Lower leg skin (tissue), 4 donors: ENCODE measurements at regions of chr18 and their contacts with region 1.

Region 1: GRCh38 chr18:60809937-60810336 is 437.4 kb upstream of the MC4R start:
- DNase-seq: no peak
- H3K4me3 ChIP-seq: no peak overlapping the region
- CTCF ChIP-seq: no peak
- POLR2A ChIP-seq: no peak

Region 2: GRCh38 chr18:60421356-60422118 is 388.4 kb before region 1 on chr18:
- intact Hi-C with region 1: no loop called
- DNase-seq: no peak
- H3K4me3 ChIP-seq: no peak overlapping the region
- CTCF ChIP-seq: no peak
- POLR2A ChIP-seq: no peak

Region 3: GRCh38 chr18:60794802-60795201 is 15.1 kb before region 1 on chr18:
- intact Hi-C with region 1: no loop called
- DNase-seq: no peak
- H3K4me3 ChIP-seq: no peak overlapping the region
- CTCF ChIP-seq: no peak
- POLR2A ChIP-seq: no peak

Region 4: DNA sequence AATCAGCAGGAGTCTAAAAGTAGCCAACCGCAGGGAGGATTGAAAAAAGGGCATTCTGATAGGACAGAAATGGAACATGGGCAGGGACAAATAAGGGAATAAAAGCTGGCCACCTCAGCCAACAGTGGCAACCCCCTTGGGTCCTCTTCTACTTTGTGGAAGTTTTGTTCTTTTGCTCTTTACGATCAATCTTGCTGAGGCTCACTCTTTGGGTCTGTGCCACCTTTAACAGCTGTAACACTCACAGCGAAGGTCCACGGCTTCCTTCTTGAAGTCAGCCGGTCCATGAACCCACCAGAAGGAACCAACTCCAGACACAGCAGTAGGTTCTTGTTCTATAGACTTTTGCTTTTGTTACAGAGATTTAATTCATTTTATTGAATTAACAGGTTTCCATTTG is 237.9 kb after region 1 on chr18:
- intact Hi-C with region 1: no loop called
- DNase-seq: no peak
- H3K4me3 ChIP-seq: no peak overlapping the region
- CTCF ChIP-seq: no peak
- POLR2A ChIP-seq: no peak

Region 5: GRCh38 chr18:61496374-61496773 is 686.4 kb after region 1 on chr18:
- intact Hi-C with region 1: loop called (anchors 10 kb)
- DNase-seq: no peak
- H3K4me3 ChIP-seq: no peak overlapping the region
- CTCF ChIP-seq: no peak
- POLR2A ChIP-seq: no peak